Natural killer cell (primary cell): ENCODE measurements at regions of chr17 and their contacts with region 1.

Region 1: GRCh38 chr17:53100126-53100525 is 722.6 kb upstream of the KIF2B start:
- DNase-seq: no peak
- ATAC-seq: no peak
- H3K4me3 ChIP-seq: no peak overlapping the region
- H3K4me3 Mint-ChIP-seq: no peak overlapping the region
- H3K27ac ChIP-seq: no peak overlapping the region
- H3K27ac Mint-ChIP-seq: no peak overlapping the region
- H3K4me1 ChIP-seq: no peaks in the 10 kb centered on the region
- H3K4me1 Mint-ChIP-seq: no peaks in the 10 kb centered on the region
- H3K27me3 ChIP-seq: no peaks in the 10 kb centered on the region
- H3K27me3 Mint-ChIP-seq: no peaks in the 10 kb centered on the region
- CTCF ChIP-seq: no peak

Region 2: DNA sequence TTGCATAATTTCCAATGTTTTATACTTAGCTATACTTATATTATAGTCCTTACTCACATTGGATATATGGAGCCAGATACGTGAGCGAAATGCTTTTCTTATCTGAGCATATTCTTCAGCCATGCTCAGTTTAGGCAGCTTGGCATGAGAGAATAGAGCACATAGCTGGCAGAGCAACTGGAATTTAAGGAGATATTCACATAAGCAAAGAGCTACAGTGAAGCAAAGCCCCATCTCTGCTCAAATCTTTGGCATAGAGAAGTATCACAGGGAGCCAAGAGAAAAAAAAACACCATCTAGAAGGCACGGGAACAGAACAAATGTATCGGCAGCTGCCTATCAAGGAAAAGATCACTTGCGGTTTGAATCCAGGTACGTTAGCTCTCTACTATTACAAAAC is 11.6 kb before region 1 on chr17:
- intact Hi-C with region 1: no loop called
- DNase-seq: no peak
- ATAC-seq: no peak
- H3K4me3 ChIP-seq: no peak overlapping the region
- H3K4me3 Mint-ChIP-seq: no peak overlapping the region
- H3K27ac ChIP-seq: no peak overlapping the region
- H3K27ac Mint-ChIP-seq: no peak overlapping the region
- H3K4me1 ChIP-seq: no peaks in the 10 kb centered on the region
- H3K4me1 Mint-ChIP-seq: no peaks in the 10 kb centered on the region
- H3K27me3 ChIP-seq: no peaks in the 10 kb centered on the region
- H3K27me3 Mint-ChIP-seq: no peaks in the 10 kb centered on the region
- CTCF ChIP-seq: no peak

Region 3: GRCh38 chr17:53133876-53134275 is 33.8 kb after region 1 on chr17:
- intact Hi-C with region 1: loop called (anchors 5 kb)
- DNase-seq: no peak
- ATAC-seq: no peak
- H3K4me3 ChIP-seq: no peak overlapping the region
- H3K4me3 Mint-ChIP-seq: no peak overlapping the region
- H3K27ac ChIP-seq: no peak overlapping the region
- H3K27ac Mint-ChIP-seq: no peak overlapping the region
- H3K4me1 ChIP-seq: no peaks in the 10 kb centered on the region
- H3K4me1 Mint-ChIP-seq: no peaks in the 10 kb centered on the region
- H3K27me3 ChIP-seq: no peaks in the 10 kb centered on the region
- H3K27me3 Mint-ChIP-seq: no peaks in the 10 kb centered on the region
- CTCF ChIP-seq: no peak